Mammary epithelial cell (primary cell): ENCODE measurements at regions of chr11 and their contacts with region 1.

Region 1: DNA sequence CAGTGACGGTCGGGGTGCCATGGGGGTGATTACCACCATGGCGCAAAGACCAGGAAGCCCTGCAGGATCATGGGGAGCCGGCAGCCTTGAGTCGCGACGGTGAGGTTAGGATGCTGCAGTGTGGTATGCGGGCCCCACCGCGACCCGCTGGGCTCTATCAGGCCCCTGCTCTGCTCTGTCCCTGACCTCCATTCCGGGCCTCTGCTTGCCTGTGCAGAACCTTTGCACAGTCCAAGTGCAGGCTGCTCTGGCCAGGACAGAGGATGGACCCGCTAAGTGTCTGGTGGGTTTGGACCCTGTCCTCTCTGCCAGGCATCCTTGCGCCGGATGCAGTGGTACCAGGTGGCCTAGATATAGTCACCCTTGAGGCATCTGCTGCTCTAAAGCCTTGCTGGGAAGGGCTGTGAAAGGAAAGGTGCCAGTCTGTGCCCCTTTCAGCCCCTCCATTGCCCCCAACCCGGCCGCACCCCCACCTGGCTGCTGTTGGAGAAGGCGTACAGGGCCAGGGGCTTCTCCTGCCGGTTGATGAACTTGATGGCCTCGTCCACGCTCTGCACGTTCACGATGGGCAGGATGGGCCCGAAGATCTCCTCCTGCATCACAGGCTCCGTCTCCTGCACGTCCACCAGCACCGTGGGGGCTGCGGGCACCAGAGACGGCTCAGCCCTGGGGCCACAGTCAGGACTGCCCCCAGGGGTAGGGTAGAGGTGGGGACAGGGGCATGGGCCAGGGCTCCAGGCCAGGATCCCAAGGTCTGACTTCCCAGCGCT is 10.3 kb downstream of the ALDH3B2 start:
- DNase-seq: no peak
- H3K4me3 ChIP-seq: no peak overlapping the region
- H3K27ac ChIP-seq: no peak overlapping the region
- H3K4me1 ChIP-seq: no peaks in the 10 kb centered on the region
- H3K27me3 ChIP-seq: no peaks in the 10 kb centered on the region
- CTCF ChIP-seq: no peak

Region 2: GRCh38 chr11:67230406-67230805 is 433.7 kb before region 1 on chr11:
- CTCF ChIA-PET with region 1: no interaction called
- dilution Hi-C with region 1: no loop called
- in situ Hi-C with region 1: no loop called
- intact Hi-C with region 1: no loop called
- DNase-seq: peak; percentile 14
- H3K4me3 ChIP-seq: no peak overlapping the region
- H3K27ac ChIP-seq: no peak overlapping the region
- H3K4me1 ChIP-seq: no peaks in the 10 kb centered on the region
- H3K27me3 ChIP-seq: no peaks in the 10 kb centered on the region
- CTCF ChIP-seq: no peak

Region 3: GRCh38 chr11:67563354-67564114 is 100.6 kb before region 1 on chr11:
- CTCF ChIA-PET with region 1: no interaction called
- dilution Hi-C with region 1: loop called (anchors 5 kb)
- in situ Hi-C with region 1: no loop called
- intact Hi-C with region 1: no loop called
- DNase-seq: peak; percentile 68
- H3K4me3 ChIP-seq: no peak overlapping the region
- H3K27ac ChIP-seq: no peak overlapping the region
- H3K4me1 ChIP-seq: peaks cover 12% of the 10 kb centered on the region
- H3K27me3 ChIP-seq: no peaks in the 10 kb centered on the region
- CTCF ChIP-seq: no peak

Region 4: GRCh38 chr11:67600324-67601029 is 63.6 kb before region 1 on chr11:
- CTCF ChIA-PET with region 1: no interaction called
- dilution Hi-C with region 1: loop called (anchors 5 kb)
- in situ Hi-C with region 1: no loop called
- intact Hi-C with region 1: no loop called
- DNase-seq: no peak
- H3K4me3 ChIP-seq: no peak overlapping the region
- H3K27ac ChIP-seq: no peak overlapping the region
- H3K4me1 ChIP-seq: no peaks in the 10 kb centered on the region
- H3K27me3 ChIP-seq: no peaks in the 10 kb centered on the region
- CTCF ChIP-seq: no peak

Region 5: GRCh38 chr11:67651976-67652781 is 11.9 kb before region 1 on chr11:
- CTCF ChIA-PET with region 1: no interaction called
- dilution Hi-C with region 1: no loop called
- in situ Hi-C with region 1: no loop called
- intact Hi-C with region 1: no loop called
- DNase-seq: no peak
- H3K4me3 ChIP-seq: no peak overlapping the region
- H3K27ac ChIP-seq: no peak overlapping the region
- H3K4me1 ChIP-seq: peaks cover 15% of the 10 kb centered on the region
- H3K27me3 ChIP-seq: no peaks in the 10 kb centered on the region
- CTCF ChIP-seq: no peak

Region 6: GRCh38 chr11:67700548-67701262 is 36.6 kb after region 1 on chr11:
- CTCF ChIA-PET with region 1: interaction called, 3 read pairs
- dilution Hi-C with region 1: loop called (anchors 5 kb)
- in situ Hi-C with region 1: no loop called
- intact Hi-C with region 1: no loop called
- DNase-seq: no peak
- H3K4me3 ChIP-seq: no peak overlapping the region
- H3K27ac ChIP-seq: no peak overlapping the region
- H3K4me1 ChIP-seq: peaks cover 16% of the 10 kb centered on the region
- H3K27me3 ChIP-seq: no peaks in the 10 kb centered on the region
- CTCF ChIP-seq: no peak

Region 7: GRCh38 chr11:67745176-67745726 is 81.1 kb after region 1 on chr11:
- CTCF ChIA-PET with region 1: no interaction called
- dilution Hi-C with region 1: no loop called
- in situ Hi-C with region 1: no loop called
- intact Hi-C with region 1: no loop called
- DNase-seq: no peak
- H3K4me3 ChIP-seq: no peak overlapping the region
- H3K27ac ChIP-seq: no peak overlapping the region
- H3K4me1 ChIP-seq: no peaks in the 10 kb centered on the region
- H3K27me3 ChIP-seq: no peaks in the 10 kb centered on the region
- CTCF ChIP-seq: no peak